ENCODE measurements at regions of chr14 and their contacts with region 1.

Region 1: GRCh38 chr14:68042608-68043210 is 223.1 kb downstream of the RAD51B start:
- DNase-seq: no peak
- ATAC-seq: no peak
- H3K4me3 Mint-ChIP-seq: no peak overlapping the region
- H3K27ac Mint-ChIP-seq: peak overlapping the region; percentile 97
- H3K4me1 Mint-ChIP-seq: peaks cover 62% of the 10 kb centered on the region
- H3K27me3 Mint-ChIP-seq: no peaks in the 10 kb centered on the region
- CTCF ChIP-seq: no peak

Region 2: DNA sequence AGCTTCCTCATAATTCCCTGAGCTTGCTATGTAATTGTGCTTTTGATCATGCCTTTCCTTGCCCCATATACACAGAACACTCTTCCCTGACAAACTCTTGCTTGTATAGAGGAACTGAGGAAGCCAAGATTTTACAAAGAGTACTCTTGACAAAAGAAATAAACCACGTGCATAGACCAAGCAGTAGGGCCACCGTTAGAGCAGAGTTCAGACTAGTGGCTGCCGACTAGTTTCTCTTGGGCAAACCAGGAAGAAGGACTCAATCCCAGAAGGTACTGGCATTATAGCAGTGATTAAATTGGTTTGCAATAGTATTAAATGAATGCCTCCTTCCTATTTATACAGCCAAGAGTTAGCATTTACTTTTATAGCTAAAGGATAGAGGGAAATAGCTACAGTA is 77.0 kb before region 1 on chr14:
- CTCF ChIA-PET with region 1: no interaction called
- POLR2A ChIA-PET with region 1: interaction called, 12 read pairs
- DNase-seq: no peak
- ATAC-seq: no peak
- H3K4me3 Mint-ChIP-seq: no peak overlapping the region
- H3K27ac Mint-ChIP-seq: no peak overlapping the region
- H3K4me1 Mint-ChIP-seq: peaks cover 10% of the 10 kb centered on the region
- H3K27me3 Mint-ChIP-seq: no peaks in the 10 kb centered on the region
- CTCF ChIP-seq: no peak

Region 3: GRCh38 chr14:68060198-68060597 is 17.5 kb after region 1 on chr14:
- CTCF ChIA-PET with region 1: no interaction called
- POLR2A ChIA-PET with region 1: no interaction called
- DNase-seq: no peak
- ATAC-seq: no peak
- H3K4me3 Mint-ChIP-seq: no peak overlapping the region
- H3K27ac Mint-ChIP-seq: no peak overlapping the region
- H3K4me1 Mint-ChIP-seq: peaks cover 6% of the 10 kb centered on the region
- H3K27me3 Mint-ChIP-seq: no peaks in the 10 kb centered on the region
- CTCF ChIP-seq: no peak